ENCODE measurements at regions of chrX and their contacts with region 1.

Region 1: DNA sequence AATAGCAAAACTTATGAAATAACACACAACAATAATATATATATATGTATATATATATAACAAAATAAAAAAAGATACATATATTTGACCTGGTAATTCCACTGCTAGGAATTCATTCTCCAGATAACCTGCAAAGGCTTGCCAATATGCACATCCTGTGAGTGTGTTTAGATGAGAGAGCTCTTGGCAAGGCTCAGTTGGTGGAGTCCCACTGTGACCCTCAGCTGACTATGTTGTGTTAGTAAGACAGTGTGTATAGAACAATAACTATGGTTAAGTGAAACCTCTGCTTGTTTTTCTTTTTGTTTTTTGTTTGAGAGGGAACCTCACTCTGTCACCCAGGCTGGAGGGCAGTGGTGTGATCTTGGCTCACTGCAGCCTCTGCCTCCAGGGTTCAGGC is 39.5 kb upstream of the RBMX start:
- DNase-seq: no peak

Region 2: DNA sequence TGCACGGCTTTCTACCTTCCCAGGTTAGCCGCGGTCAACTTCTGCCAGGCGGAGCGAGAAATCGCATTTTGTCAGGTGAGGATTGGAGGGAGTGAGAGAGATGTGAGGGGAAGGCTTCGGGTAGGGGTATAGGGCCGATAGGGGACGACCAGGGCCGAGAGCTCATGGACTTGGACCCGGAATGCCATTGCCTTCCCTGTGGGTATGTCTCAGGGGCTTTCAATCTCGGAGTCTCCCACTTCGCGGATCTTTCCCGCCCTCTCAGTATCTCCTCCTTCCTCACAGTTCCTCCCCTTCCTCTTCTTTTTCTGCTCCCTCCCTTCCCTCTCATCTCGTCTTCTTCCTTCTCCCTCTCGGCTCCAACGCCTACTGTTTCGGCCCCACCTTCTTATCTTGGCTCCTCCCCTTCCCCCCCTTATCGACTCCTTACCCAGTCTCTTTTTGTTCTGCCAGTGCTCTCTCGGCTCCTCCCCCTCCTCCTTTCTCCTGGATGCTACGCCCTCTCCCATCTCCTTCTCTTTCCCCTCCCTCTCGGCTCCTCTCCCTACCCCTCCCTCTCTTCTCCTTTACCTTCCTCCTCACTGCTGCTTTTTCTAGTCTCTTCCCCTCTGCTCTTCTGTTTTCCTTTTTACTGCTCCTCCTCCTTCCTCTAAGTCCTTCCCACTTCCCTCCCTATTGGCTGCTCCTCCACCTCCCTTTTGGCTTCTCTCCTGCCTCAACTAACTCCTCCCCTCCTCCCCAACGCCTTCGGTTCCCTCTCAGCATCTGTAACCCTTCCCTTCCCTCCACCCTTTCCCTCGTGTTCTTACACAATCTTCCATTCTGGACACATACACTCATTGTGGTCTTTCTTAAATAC is 10.1 kb before region 1 on chrX:
- CTCF ChIA-PET with region 1: no interaction called
- POLR2A ChIA-PET with region 1: no interaction called
- DNase-seq: peak; percentile 82

Region 3: DNA sequence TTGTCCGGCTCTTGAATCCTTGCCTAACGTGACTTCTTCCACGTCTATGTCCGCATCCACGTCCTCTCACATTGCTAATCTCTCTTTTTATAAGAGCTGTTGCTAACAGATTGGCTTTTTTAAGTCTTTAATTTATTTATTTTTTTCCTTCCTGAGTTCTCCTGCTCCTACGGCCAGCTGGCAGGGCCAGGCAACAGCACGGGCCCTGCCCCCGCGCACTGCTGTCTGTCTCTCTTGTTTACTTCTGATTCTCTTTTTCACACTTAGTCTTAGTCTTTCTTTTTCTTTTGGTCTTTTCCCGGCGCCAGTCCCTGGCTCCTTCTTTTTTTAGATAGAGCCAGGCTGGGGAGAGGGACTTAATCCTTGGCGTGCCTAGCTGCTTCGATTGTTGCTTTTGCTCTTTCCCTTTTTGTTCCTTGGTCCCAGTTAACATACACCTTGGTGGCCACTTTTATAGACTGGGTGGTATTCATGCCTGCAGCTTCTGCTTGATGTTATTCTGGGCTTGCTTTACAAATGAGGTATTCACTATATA is 13.7 kb after region 1 on chrX:
- CTCF ChIA-PET with region 1: interaction called, 12 read pairs
- POLR2A ChIA-PET with region 1: no interaction called
- DNase-seq: no peak